ENCODE measurements at regions of chr1 and their contacts with region 1.

Region 1: GRCh38 chr1:156689035-156689952 is 12.1 kb upstream of the NES start:
- DNase-seq: peak; percentile 65
- H3K4me3 ChIP-seq: peak overlapping the region; percentile 44
- H3K27ac ChIP-seq: no peak overlapping the region
- H3K27me3 ChIP-seq: no peaks in the 10 kb centered on the region
- CTCF ChIP-seq: peak; percentile 93

Region 2: DNA sequence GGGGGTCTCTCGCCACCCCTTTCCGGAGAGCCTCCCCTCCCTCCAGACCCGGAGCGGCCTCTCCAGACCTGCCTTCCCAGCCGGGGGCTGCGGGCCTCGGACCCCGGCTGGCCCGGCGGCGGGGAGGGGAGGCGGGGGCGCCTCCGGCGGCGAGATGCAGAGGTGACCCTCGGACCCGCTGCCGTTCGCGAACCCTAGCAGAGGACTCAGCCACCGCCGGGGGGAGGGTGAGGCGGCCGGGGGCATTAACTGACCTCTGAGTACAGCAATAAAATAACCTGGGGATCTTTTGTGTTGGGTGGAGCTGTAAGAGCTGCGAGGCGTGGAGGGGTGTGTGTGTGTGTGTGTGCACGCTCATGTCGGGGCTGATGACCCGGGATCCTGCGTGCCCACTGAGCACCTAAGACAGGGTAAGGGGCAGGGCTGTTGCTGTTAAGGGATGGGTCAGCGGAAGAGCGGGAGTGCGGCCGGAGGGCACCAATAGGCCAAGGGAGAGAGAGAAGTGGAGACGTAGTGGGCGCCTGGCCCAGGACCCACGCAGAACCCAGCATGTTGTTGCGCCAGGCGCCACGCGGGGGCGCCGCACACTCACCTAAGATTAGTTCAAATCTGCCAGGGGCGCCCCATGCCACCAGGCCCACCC is 63.7 kb before region 1 on chr1:
- CTCF ChIA-PET with region 1: interaction called, 15 read pairs
- POLR2A ChIA-PET with region 1: no interaction called
- DNase-seq: no peak
- H3K4me3 ChIP-seq: no peak overlapping the region
- H3K27ac ChIP-seq: no peak overlapping the region
- H3K27me3 ChIP-seq: peaks cover 46% of the 10 kb centered on the region
- CTCF ChIP-seq: peak; percentile 80

Region 3: DNA sequence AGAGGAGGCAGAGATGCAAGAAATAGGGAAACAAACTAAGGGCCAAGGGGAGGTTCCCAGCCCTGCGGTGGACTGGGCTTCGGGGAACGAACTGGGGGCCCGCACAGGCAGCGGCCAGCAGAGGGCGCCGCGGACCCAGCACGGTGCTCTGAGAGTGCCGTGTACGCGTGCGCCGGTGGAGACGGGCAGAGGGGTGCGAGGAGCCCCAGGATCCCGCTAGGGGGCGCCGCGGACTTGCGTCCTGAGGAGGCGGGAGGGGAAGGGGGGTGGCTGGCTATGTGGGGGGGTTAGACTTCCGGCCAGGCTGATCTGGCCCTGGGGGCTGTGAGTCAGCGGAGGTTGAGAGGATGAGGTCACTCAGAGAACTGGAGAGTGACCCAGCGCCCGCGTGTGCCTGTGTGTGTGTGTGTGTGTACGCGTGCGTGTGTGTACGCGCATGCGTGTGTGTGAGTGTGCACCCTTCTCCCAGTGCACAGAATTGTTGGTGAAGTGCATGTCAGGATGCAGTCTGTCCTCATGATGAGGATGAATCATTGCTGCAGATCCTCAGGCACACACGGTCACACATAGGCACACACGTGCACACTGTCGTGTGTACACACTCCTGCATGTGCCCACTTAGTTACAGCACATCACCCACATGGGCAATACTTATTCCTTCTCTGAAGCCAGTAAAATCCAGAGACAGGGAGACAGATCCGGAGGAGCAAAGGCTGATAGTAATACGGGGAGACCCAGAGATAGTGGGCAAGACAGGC is 29.1 kb before region 1 on chr1:
- CTCF ChIA-PET with region 1: interaction called, 71 read pairs
- POLR2A ChIA-PET with region 1: no interaction called
- DNase-seq: peak; percentile 97
- H3K4me3 ChIP-seq: peak overlapping the region; percentile 25; the same call in 1 of the 2 replicates
- H3K27ac ChIP-seq: peak overlapping the region; percentile 86
- H3K27me3 ChIP-seq: peaks cover 23% of the 10 kb centered on the region
- CTCF ChIP-seq: peak; percentile 95

Region 4: DNA sequence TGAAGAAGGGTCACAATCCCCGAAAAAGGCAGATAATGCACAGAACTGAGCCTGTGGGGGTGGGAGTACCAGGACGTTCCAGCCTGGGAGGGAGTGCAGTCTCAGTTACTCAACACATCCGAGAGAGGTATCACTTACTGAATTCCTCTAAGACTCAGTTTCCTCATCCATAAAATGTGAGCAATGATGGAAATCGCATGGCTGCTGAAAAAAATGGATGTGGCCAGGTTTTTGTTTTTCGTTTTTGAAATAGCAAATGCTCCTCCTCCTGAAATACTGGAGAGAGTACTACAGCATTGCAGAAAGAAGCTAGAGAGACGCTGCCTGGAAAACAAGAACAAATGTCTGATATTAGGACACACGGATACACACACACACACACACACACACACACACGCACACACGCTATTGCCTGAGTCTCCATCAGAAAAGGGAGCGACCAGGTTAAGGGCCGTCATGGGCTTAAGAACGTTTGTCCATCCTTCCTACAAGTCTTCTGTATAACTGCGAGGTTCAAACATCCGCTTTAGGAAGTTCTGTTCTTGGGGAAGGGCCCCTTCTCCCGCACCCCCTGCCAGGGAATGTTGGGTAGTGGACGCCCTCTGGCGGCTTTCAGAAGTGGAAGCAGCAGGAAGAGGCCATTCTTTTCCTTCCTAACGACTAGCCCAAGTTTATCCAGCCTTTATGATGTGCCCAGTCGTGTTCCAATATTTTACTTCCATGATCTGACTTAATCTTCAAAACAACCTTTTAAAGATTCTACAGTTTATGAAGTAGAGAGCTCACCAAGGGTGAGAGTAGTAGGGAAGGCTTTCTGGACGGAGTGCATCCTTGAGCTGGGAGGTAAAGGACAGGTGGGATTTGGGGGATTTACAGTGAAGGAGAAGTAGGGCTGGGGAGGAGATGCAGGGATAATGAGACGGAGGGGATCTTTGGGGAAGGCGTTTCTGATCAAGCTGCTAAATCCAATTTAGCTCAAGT is 11.4 kb before region 1 on chr1:
- CTCF ChIA-PET with region 1: interaction called, 108 read pairs
- POLR2A ChIA-PET with region 1: interaction called, 7 read pairs
- DNase-seq: no peak
- H3K4me3 ChIP-seq: peak overlapping the region; percentile 64
- H3K27ac ChIP-seq: peak overlapping the region; percentile 31
- H3K27me3 ChIP-seq: peaks cover 12% of the 10 kb centered on the region
- CTCF ChIP-seq: peak; percentile 96

Region 5: GRCh38 chr1:156797212-156797871 is 108.0 kb after region 1 on chr1:
- CTCF ChIA-PET with region 1: interaction called, 21 read pairs
- POLR2A ChIA-PET with region 1: no interaction called
- DNase-seq: peak; percentile 26
- H3K4me3 ChIP-seq: no peak overlapping the region
- H3K27ac ChIP-seq: no peak overlapping the region
- H3K27me3 ChIP-seq: no peaks in the 10 kb centered on the region
- CTCF ChIP-seq: peak; percentile 94

Region 6: GRCh38 chr1:156892190-156893047 is 203.1 kb after region 1 on chr1:
- CTCF ChIA-PET with region 1: interaction called, 72 read pairs
- POLR2A ChIA-PET with region 1: no interaction called
- DNase-seq: peak; percentile 68
- H3K4me3 ChIP-seq: peak overlapping the region; percentile 41
- H3K27ac ChIP-seq: peak overlapping the region; percentile 61
- H3K27me3 ChIP-seq: peaks cover 6% of the 10 kb centered on the region
- CTCF ChIP-seq: peak; percentile 82